PC-3 (cell line): ENCODE measurements at regions of chr14 and their contacts with region 1.

Region 1: DNA sequence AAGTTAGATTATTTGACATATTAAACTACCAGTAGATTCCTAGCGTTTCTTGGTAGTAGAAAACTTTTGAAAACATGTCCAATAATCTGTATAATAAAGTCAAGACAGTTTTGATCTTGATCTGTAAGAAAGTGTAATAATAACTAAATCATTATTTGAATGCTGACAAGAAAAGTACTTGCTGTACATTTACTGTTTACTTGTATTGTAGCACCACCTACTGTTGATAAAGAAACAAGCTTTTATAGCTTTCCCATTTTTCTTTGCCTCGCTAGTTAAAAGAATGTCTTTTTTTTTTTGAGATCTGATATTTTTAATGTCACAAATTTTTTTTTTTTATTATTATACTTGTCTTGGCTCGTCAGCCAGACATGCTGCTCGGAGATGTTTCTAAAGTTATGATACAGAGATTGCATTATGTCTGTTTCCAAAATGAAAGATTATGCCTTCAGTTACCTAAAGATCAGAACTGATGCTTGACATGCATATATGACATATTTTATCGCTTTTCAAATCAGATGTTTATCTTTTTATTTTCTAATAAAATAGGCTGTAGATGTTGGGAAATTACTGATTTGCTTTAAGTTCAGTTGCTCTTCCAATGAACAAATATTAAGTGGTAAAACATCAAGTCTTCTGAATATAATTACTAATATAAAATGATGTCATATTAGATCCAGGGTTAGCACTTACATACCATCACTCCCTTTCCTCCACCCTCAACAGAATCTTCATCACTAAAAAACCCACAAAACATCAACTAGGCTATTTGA is 140.5 kb downstream of the AKAP6 start:
- DNase-seq: peak; percentile 67
- ATAC-seq: peak; percentile 18
- H3K4me3 ChIP-seq: no peak overlapping the region
- H3K27ac ChIP-seq: peak overlapping the region; percentile 23
- H3K4me1 ChIP-seq: peaks cover 57% of the 10 kb centered on the region
- H3K27me3 ChIP-seq: no peaks in the 10 kb centered on the region
- CTCF ChIP-seq: peak; percentile 79

Region 2: GRCh38 chr14:31510222-31510621 is 959.4 kb before region 1 on chr14:
- CTCF ChIA-PET with region 1: no interaction called
- POLR2A ChIA-PET with region 1: no interaction called
- intact Hi-C with region 1: loop called (anchors 2 kb)
- DNase-seq: peak; percentile 58
- ATAC-seq: peak; percentile 38
- H3K4me3 ChIP-seq: no peak overlapping the region
- H3K27ac ChIP-seq: no peak overlapping the region
- H3K4me1 ChIP-seq: no peaks in the 10 kb centered on the region
- H3K27me3 ChIP-seq: no peaks in the 10 kb centered on the region
- CTCF ChIP-seq: peak; percentile 87

Region 3: GRCh38 chr14:31726337-31726736 is 743.2 kb before region 1 on chr14:
- CTCF ChIA-PET with region 1: no interaction called
- POLR2A ChIA-PET with region 1: no interaction called
- intact Hi-C with region 1: no loop called
- DNase-seq: no peak
- ATAC-seq: no peak
- H3K4me3 ChIP-seq: no peak overlapping the region
- H3K27ac ChIP-seq: no peak overlapping the region
- H3K4me1 ChIP-seq: no peaks in the 10 kb centered on the region
- H3K27me3 ChIP-seq: no peaks in the 10 kb centered on the region
- CTCF ChIP-seq: no peak

Region 4: GRCh38 chr14:31968107-31968810 is 501.3 kb before region 1 on chr14:
- CTCF ChIA-PET with region 1: no interaction called
- POLR2A ChIA-PET with region 1: no interaction called
- intact Hi-C with region 1: no loop called
- DNase-seq: no peak
- ATAC-seq: no peak
- H3K4me3 ChIP-seq: no peak overlapping the region
- H3K27ac ChIP-seq: no peak overlapping the region
- H3K4me1 ChIP-seq: no peaks in the 10 kb centered on the region
- H3K27me3 ChIP-seq: no peaks in the 10 kb centered on the region
- CTCF ChIP-seq: no peak

Region 5: GRCh38 chr14:32134448-32135070 is 335.0 kb before region 1 on chr14:
- CTCF ChIA-PET with region 1: no interaction called
- POLR2A ChIA-PET with region 1: no interaction called
- intact Hi-C with region 1: loop called (anchors 2 kb)
- DNase-seq: peak; percentile 93
- ATAC-seq: peak; percentile 92
- H3K4me3 ChIP-seq: no peak overlapping the region
- H3K27ac ChIP-seq: peak overlapping the region; percentile 79
- H3K4me1 ChIP-seq: peaks cover 23% of the 10 kb centered on the region
- H3K27me3 ChIP-seq: no peaks in the 10 kb centered on the region
- CTCF ChIP-seq: no peak

Region 6: DNA sequence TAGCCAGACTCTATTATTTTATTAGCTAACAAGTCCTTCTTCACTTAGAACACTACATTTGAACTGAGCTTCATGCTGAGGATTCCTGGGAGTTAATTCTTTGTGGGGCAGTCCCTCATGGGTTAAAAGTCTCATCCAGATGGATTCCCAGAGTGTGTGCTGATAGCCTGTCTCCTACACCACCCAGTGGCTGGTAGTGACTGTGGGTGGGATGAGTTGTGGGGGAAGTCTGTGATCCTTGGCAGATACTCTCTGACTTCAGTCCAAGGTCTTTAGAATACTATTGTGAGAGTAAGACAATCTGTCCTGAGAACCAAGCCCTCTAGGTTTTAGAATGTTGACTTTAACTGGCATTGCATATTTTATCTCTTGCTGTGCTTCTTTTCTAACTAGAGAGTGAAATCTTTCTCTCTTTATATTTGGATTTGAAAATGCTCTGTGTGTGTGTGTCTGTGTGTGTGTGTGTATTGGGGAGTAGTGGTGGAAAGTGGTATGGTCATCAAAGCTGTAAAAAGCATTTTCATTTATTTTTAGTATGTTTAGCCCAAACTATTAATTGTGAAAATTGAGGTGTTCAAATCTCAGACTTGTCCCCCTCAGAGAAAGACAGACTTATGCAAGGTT is 103.2 kb before region 1 on chr14:
- CTCF ChIA-PET with region 1: no interaction called
- POLR2A ChIA-PET with region 1: no interaction called
- intact Hi-C with region 1: no loop called
- DNase-seq: peak; percentile 4
- ATAC-seq: no peak
- H3K4me3 ChIP-seq: no peak overlapping the region
- H3K27ac ChIP-seq: no peak overlapping the region
- H3K4me1 ChIP-seq: peaks cover 32% of the 10 kb centered on the region
- H3K27me3 ChIP-seq: no peaks in the 10 kb centered on the region
- CTCF ChIP-seq: 0 out of 2 replicates have a peak, but pooled peaks have one; percentile 28

Region 7: GRCh38 chr14:32382704-32383103 is 86.9 kb before region 1 on chr14:
- CTCF ChIA-PET with region 1: interaction called, 10 read pairs
- POLR2A ChIA-PET with region 1: no interaction called
- intact Hi-C with region 1: loop called (anchors 1 kb)
- DNase-seq: peak; percentile 59
- ATAC-seq: peak; percentile 97
- H3K4me3 ChIP-seq: no peak overlapping the region
- H3K27ac ChIP-seq: no peak overlapping the region
- H3K4me1 ChIP-seq: peaks cover 28% of the 10 kb centered on the region
- H3K27me3 ChIP-seq: no peaks in the 10 kb centered on the region
- CTCF ChIP-seq: peak; percentile 88

Region 8: DNA sequence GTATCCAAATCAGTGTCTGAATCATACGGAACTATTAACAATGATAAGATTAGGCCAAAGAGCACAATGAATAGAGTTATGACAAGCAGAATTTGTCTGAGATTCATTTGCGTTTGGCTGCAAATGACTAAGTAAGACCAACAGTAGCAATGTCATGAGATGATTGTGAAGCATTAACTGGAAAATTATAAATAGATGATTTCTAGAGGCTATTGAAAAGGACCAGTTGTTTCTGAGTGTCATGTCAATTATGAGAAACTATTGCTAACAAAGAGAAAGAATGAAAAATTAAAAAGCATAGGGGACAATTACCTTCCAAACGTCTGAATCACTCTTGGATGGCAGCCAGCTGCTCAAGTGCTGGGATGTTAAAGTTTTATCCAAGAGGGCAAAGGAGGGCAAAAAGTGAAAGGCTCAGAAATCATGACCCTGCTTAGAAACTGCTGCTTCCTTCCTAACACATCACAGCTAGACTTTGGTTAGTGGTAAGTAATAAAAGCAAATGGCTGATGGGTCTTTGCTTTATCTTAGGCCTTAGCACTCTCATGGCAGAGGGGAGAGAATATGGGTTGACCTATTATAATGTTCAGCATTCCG is 51.5 kb before region 1 on chr14:
- CTCF ChIA-PET with region 1: no interaction called
- POLR2A ChIA-PET with region 1: no interaction called
- intact Hi-C with region 1: loop called (anchors 5 kb)
- DNase-seq: peak; percentile 82
- ATAC-seq: peak; percentile 78
- H3K4me3 ChIP-seq: peak overlapping the region; percentile 1; the same call in 1 of the 2 replicates
- H3K27ac ChIP-seq: peak overlapping the region; percentile 51
- H3K4me1 ChIP-seq: peaks cover 48% of the 10 kb centered on the region
- H3K27me3 ChIP-seq: no peaks in the 10 kb centered on the region
- CTCF ChIP-seq: no peak

Region 9: GRCh38 chr14:32560209-32560857 is 90.8 kb after region 1 on chr14:
- CTCF ChIA-PET with region 1: interaction called, 7 read pairs
- POLR2A ChIA-PET with region 1: interaction called, 3 read pairs
- intact Hi-C with region 1: loop called (anchors 1 kb)
- DNase-seq: peak; percentile 84
- ATAC-seq: peak; percentile 61
- H3K4me3 ChIP-seq: no peak overlapping the region
- H3K27ac ChIP-seq: no peak overlapping the region
- H3K4me1 ChIP-seq: peaks cover 30% of the 10 kb centered on the region
- H3K27me3 ChIP-seq: no peaks in the 10 kb centered on the region
- CTCF ChIP-seq: peak; percentile 97